Natural killer cell (primary cell): ENCODE measurements at regions of chr21 and their contacts with region 1.

Region 1: DNA sequence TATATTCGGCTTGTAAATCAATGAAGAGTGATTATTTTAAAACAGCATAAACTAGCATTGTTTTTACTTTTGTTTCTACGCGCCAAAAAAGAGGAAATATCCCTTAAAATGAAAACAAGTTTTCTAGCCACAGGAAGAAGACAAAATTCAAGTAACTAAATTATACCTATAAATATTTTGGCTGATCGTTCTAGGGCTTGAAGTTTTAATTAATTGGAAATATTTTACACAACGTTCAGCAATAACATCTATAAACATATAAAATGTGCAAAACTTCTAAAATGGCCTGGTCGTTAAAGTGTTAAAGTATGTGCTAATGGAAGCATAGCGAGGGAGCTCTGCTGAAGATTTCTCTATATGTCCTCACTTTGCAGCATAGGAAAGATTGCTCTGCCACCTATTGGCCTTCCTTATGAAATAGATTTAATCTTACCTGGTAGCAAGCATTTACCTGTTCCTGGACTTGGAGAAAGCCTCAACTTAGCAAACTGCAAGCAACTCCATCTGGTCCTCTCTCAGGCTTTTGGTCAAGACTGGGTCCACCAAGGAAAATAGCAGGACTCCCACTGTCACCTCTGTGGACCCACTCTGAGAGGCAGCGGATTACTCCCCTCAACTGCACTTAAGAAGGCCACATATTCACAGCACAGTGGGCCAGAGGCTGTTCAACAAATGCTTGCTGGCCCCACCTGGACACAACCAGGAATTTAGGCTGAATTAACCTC is 351.3 kb upstream of the RUNX1 start:
- DNase-seq: peak; percentile 15 to 81
- ATAC-seq: peak; percentile 64 to 83 (median 77)
- H3K4me3 ChIP-seq: no peak overlapping the region
- H3K4me3 Mint-ChIP-seq: no peak overlapping the region
- H3K27ac ChIP-seq: no peak overlapping the region
- H3K27ac Mint-ChIP-seq: no peak overlapping the region
- H3K4me1 ChIP-seq: no peaks in the 10 kb centered on the region
- H3K4me1 Mint-ChIP-seq: no peaks in the 10 kb centered on the region
- H3K27me3 ChIP-seq: no peaks in the 10 kb centered on the region
- H3K27me3 Mint-ChIP-seq: peaks cover 17 to 33% of the 10 kb centered on the region in 2 donors
- CTCF ChIP-seq: peak; percentile 62

Region 2: DNA sequence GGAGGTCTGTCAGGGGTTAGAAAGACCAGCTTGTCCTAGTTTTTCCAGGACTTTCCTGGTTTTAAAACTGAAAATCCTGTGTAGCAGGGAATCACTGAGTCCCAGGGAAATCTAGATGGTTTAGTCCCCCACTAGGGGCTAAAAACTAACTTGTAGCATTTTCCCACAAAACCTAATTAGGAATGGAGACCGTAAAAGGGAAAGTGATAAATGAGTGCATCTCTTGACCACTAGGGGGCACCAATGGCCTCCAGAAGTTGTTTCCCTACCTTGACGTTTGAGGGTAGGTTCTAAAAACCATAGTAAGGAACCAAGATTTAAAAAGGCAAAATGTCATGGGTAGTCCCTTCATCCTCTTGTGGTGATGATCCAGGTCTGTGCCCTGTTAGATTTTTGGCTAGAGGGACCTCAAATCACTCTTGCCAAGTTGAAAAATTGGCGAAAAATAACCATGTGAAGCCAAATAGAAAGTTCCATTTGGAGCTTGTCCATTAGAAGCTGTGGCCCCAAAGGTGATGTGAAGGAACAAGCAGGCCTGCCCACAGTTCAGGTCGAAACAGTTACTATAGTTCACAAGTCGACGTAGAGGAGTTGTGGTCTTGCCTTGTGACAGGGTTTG is 707.1 kb before region 1 on chr21:
- intact Hi-C with region 1: loop called (anchors 2 kb)
- DNase-seq: peak in 1 of 2 donors; percentile 81
- ATAC-seq: peak in 2 of 3 donors; percentile 36 to 57
- H3K4me3 ChIP-seq: no peak overlapping the region
- H3K4me3 Mint-ChIP-seq: no peak overlapping the region
- H3K27ac ChIP-seq: no peak overlapping the region
- H3K27ac Mint-ChIP-seq: no peak overlapping the region
- H3K4me1 ChIP-seq: no peaks in the 10 kb centered on the region
- H3K4me1 Mint-ChIP-seq: peaks cover 0 to 4% of the 10 kb centered on the region in 2 donors
- H3K27me3 ChIP-seq: no peaks in the 10 kb centered on the region
- H3K27me3 Mint-ChIP-seq: peaks cover 19 to 26% of the 10 kb centered on the region in 2 donors
- CTCF ChIP-seq: peak; percentile 91

Region 3: GRCh38 chr21:34801519-34802132 is 598.8 kb before region 1 on chr21:
- intact Hi-C with region 1: loop called (anchors 1 kb)
- DNase-seq: peak in 1 of 2 donors; percentile 53
- ATAC-seq: peak; percentile 51 to 59 (median 54)
- H3K4me3 ChIP-seq: no peak overlapping the region
- H3K4me3 Mint-ChIP-seq: no peak overlapping the region
- H3K27ac ChIP-seq: no peak overlapping the region
- H3K27ac Mint-ChIP-seq: peak overlapping the region; percentile 70 to 78
- H3K4me1 ChIP-seq: peaks cover 6% of the 10 kb centered on the region
- H3K4me1 Mint-ChIP-seq: peaks cover 51 to 59% of the 10 kb centered on the region in 2 donors
- H3K27me3 ChIP-seq: no peaks in the 10 kb centered on the region
- H3K27me3 Mint-ChIP-seq: no peaks in the 10 kb centered on the region
- CTCF ChIP-seq: no peak